ENCODE measurements at regions of chrX and their contacts with region 1.

Region 1: DNA sequence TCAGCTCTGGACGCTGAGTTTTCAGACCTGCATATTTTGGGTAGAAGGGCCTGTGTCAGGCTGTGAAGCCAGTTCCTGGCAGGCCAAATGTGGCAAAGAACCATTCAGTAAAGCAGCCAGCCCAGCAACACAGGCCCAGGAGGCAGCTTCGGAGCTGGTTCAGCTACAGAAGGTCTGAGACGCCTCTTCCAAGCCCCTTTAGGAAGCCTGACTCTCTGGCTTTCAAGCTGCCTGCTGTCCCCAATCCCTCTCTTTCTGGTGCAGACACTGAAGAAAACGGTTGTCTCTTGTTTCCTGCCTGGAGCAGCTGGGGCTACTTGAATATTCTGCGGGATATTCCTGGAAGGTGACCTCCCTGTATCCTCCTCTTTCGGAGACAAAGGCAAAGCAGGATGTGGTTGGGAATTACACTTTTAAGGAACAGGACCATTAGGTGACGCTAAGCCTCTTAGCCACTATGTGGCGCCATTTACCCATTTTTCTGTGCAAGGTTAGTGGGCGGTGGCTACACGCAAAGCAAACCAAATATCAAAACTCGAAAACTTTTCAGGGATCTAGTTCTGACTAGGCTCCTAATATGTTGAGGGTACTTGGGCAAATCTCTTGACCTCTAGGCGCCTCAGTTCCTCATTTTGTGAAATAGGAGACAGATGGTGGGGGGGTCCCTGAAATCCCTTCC is 47.2 kb upstream of the LAS1L start:
- DNase-seq: peak; percentile 42 to 50
- H3K4me3 ChIP-seq: no peak overlapping the region
- H3K4me3 Mint-ChIP-seq: no peak overlapping the region
- H3K27ac Mint-ChIP-seq: no peak overlapping the region
- H3K4me1 ChIP-seq: no peaks in the 10 kb centered on the region
- H3K4me1 Mint-ChIP-seq: no peaks in the 10 kb centered on the region
- H3K27me3 ChIP-seq: no peaks in the 10 kb centered on the region
- H3K27me3 Mint-ChIP-seq: peaks cover 3% of the 10 kb centered on the region
- CTCF ChIP-seq: peak; percentile 25 to 60

Region 2: DNA sequence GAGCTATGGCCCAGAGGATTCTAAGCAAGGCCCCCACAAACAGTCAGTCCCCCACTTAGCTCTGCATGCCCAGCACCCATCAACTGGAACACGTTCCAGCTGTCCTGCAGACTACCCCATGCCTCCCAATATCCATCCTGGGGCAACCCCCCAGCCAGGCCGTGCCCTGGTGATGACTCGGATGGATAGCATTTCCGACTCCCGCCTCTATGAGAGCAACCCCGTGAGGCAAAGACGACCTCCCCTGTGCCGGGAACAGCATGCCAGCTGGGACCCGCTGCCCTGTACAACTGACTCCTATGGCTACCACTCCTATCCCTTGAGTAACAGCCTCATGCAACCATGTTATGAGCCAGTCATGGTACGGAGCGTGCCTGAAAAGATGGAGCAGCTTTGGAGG is 79.2 kb before region 1 on chrX:
- CTCF ChIA-PET with region 1: no interaction called
- POLR2A ChIA-PET with region 1: no interaction called
- intact Hi-C with region 1: no loop called
- DNase-seq: no peak
- H3K4me3 ChIP-seq: no peak overlapping the region
- H3K4me3 Mint-ChIP-seq: no peak overlapping the region
- H3K27ac Mint-ChIP-seq: no peak overlapping the region
- H3K4me1 ChIP-seq: no peaks in the 10 kb centered on the region
- H3K4me1 Mint-ChIP-seq: no peaks in the 10 kb centered on the region
- H3K27me3 ChIP-seq: no peaks in the 10 kb centered on the region
- H3K27me3 Mint-ChIP-seq: no peaks in the 10 kb centered on the region
- CTCF ChIP-seq: no peak

Region 3: GRCh38 chrX:65985922-65986588 is 404.3 kb after region 1 on chrX:
- CTCF ChIA-PET with region 1: no interaction called
- POLR2A ChIA-PET with region 1: no interaction called
- intact Hi-C with region 1: loop called (anchors 1 kb)
- DNase-seq: peak in 1 of 2 experiments; percentile 15
- H3K4me3 ChIP-seq: no peak overlapping the region
- H3K4me3 Mint-ChIP-seq: no peak overlapping the region
- H3K27ac Mint-ChIP-seq: no peak overlapping the region
- H3K4me1 ChIP-seq: no peaks in the 10 kb centered on the region
- H3K4me1 Mint-ChIP-seq: no peaks in the 10 kb centered on the region
- H3K27me3 ChIP-seq: no peaks in the 10 kb centered on the region
- H3K27me3 Mint-ChIP-seq: no peaks in the 10 kb centered on the region
- CTCF ChIP-seq: peak in 1 of 2 experiments; percentile 43

Region 4: GRCh38 chrX:66200855-66201795 is 619.3 kb after region 1 on chrX:
- CTCF ChIA-PET with region 1: no interaction called
- POLR2A ChIA-PET with region 1: no interaction called
- intact Hi-C with region 1: loop called (anchors 5 kb)
- DNase-seq: peak in 1 of 2 experiments; percentile 10
- H3K4me3 ChIP-seq: no peak overlapping the region
- H3K4me3 Mint-ChIP-seq: no peak overlapping the region
- H3K27ac Mint-ChIP-seq: peak overlapping the region; percentile 15
- H3K4me1 ChIP-seq: peaks cover 22% of the 10 kb centered on the region
- H3K4me1 Mint-ChIP-seq: peaks cover 23% of the 10 kb centered on the region
- H3K27me3 ChIP-seq: no peaks in the 10 kb centered on the region
- H3K27me3 Mint-ChIP-seq: no peaks in the 10 kb centered on the region
- CTCF ChIP-seq: no peak

Region 5: DNA sequence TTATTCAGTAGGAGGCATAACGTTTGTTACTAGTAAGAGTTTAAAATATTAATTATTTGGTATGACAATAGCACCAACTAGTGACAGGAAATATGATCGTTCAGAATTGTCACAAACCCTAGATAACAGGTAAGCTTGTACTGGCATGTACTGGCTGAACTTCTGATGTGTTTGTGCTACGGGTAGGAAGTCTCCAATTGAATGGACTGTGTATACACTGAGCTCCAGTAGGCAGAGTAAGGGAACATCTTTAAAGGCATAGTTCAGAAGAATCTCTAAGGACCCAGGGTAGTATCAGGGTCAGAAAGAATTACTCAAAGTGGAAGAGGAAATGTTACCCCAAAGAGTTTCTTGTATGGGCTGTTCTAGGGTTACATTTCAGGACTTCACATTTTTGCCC is 826.7 kb after region 1 on chrX:
- CTCF ChIA-PET with region 1: no interaction called
- POLR2A ChIA-PET with region 1: no interaction called
- intact Hi-C with region 1: loop called (anchors 5 kb)
- DNase-seq: peak in 1 of 2 experiments; percentile 2
- H3K4me3 ChIP-seq: no peak overlapping the region
- H3K4me3 Mint-ChIP-seq: no peak overlapping the region
- H3K27ac Mint-ChIP-seq: no peak overlapping the region
- H3K4me1 ChIP-seq: no peaks in the 10 kb centered on the region
- H3K4me1 Mint-ChIP-seq: peaks cover 10% of the 10 kb centered on the region
- H3K27me3 ChIP-seq: no peaks in the 10 kb centered on the region
- H3K27me3 Mint-ChIP-seq: no peaks in the 10 kb centered on the region
- CTCF ChIP-seq: no peak

Region 6: GRCh38 chrX:66728818-66729271 is 1147.0 kb after region 1 on chrX:
- CTCF ChIA-PET with region 1: no interaction called
- POLR2A ChIA-PET with region 1: no interaction called
- intact Hi-C with region 1: loop called (anchors 1 kb)
- DNase-seq: peak; percentile 48
- H3K4me3 ChIP-seq: peak overlapping the region; percentile 28
- H3K4me3 Mint-ChIP-seq: peak overlapping the region; percentile 75
- H3K27ac Mint-ChIP-seq: peak overlapping the region; percentile 45
- H3K4me1 ChIP-seq: no peaks in the 10 kb centered on the region
- H3K4me1 Mint-ChIP-seq: no peaks in the 10 kb centered on the region
- H3K27me3 ChIP-seq: no peaks in the 10 kb centered on the region
- H3K27me3 Mint-ChIP-seq: no peaks in the 10 kb centered on the region
- CTCF ChIP-seq: peak; percentile 49 to 62

Measured in Caco-2 (cell line).